GM18951 (cell line): ENCODE measurements at regions of chr5 and their contacts with region 1.

Region 1: DNA sequence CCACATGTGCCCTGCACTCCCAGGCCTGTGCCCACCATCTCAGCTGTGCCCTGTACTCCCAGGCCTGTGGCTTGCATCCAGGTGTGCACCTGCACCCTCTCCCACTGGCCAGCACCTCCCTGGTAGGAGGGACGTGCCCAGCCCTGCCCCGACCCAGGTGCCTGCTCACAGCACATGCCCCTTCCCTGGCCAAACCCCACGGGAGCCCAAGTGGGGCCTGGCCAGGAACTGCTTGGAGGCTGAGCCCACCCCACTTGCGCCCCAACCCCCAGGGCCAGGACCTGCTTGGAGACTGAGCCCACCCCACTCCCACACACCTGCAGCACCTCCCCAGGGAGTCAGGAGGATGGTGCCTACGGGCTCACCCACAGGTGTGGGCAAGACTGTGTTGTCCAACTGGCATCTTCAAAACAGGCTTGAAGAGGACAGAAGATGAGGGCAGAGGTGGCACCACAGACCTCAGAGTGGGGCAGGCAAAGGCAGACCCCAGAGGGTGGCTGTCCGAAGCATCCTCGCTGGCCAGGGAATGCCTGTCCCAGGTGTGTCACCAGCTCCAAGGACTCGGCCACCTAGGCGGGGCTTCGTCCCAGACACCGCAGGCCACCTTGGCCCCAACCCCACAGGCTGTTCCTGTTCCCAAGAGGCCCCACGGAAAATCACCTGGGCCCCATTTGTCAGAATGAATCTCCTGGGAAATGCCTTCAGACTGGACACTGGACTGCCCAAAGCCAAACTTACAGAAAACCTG is 10.8 kb downstream of the ZDHHC11B start:
- POLR2A ChIP-seq: no peak

Region 2: GRCh38 chr5:188488-189481 is 584.9 kb before region 1 on chr5:
- in situ Hi-C with region 1: no loop called
- POLR2A ChIP-seq: peak; percentile 30

Region 3: DNA sequence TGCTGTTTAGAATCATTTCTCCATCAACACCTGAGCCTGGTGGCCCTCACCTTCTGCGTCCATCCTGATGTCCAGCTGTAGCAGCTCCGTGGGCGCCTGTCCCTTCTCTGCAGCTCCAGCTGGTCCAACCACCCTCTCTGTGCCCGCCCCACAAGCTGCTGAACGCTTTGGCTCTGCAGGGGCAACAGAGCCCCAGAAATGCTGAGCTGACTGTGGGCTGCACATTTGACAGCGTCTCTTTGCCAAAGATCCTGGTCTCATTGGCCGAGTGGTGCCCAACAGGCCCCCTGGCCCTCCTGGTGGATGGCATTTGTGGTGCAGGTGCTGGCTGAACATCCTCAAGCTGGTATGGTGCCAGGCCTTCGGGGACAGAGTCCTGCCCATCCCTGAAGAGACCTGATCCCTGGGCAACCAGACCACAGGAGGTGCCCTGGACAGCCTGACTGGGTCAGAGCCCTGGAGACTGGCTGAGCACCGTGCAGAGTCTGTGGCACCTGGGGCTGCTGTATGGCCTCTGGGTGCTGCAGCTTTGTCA is 186.9 kb before region 1 on chr5:
- in situ Hi-C with region 1: no loop called
- POLR2A ChIP-seq: no peak

Region 4: GRCh38 chr5:683551-684481 is 89.9 kb before region 1 on chr5:
- in situ Hi-C with region 1: loop called (anchors 5 kb)
- POLR2A ChIP-seq: no peak